ENCODE measurements at regions of chr10 and their contacts with region 1.

Region 1: DNA sequence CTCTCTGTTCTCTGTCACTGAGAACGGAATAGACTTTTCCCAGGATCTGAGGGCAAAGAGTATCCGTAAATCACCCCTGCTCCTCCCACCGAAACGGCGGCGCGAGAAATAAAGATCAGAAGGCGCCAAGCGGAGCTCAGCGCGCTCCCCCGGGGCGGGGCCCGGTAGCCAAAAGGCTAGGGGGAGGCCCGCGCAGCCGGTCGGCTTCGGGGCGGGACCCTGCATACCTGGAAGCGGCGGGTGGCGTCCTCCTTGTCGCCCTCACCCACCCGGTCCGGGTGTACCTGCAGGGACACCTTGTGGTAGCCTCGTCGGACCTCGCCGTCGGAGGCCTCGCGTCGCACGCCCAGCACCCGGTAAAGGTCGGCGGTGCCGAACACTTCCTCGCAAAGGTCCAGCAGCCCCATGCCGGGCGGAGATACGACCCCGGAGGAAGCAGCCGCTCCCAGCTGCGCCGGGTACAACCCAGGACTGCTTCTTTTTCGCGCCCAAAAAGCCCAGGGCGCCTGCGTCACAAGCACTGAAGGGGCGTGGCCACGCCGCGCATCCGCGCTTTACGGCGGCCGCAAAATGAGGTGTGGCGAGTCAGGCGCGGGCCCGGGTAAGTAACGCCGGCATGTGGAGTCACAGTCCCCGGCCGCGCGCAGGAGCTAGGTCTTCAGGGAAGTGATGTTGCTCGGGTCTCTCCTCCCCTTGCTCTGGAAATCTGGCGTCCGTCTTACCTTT is at the start of gene DNAJC9:
- DNase-seq: peak; percentile 99
- ATAC-seq: peak; percentile 94
- H3K4me3 Mint-ChIP-seq: peak within 1 kb of the TSS; percentile 99
- H3K27ac Mint-ChIP-seq: peak within 1 kb of the TSS; percentile 97
- H3K4me1 Mint-ChIP-seq: peaks cover 58% of the 10 kb centered on the region
- H3K27me3 Mint-ChIP-seq: no peaks in the 10 kb centered on the region
- total RNA-seq, gene DNAJC9: 36.9 to 45.4 TPM

Region 2: DNA sequence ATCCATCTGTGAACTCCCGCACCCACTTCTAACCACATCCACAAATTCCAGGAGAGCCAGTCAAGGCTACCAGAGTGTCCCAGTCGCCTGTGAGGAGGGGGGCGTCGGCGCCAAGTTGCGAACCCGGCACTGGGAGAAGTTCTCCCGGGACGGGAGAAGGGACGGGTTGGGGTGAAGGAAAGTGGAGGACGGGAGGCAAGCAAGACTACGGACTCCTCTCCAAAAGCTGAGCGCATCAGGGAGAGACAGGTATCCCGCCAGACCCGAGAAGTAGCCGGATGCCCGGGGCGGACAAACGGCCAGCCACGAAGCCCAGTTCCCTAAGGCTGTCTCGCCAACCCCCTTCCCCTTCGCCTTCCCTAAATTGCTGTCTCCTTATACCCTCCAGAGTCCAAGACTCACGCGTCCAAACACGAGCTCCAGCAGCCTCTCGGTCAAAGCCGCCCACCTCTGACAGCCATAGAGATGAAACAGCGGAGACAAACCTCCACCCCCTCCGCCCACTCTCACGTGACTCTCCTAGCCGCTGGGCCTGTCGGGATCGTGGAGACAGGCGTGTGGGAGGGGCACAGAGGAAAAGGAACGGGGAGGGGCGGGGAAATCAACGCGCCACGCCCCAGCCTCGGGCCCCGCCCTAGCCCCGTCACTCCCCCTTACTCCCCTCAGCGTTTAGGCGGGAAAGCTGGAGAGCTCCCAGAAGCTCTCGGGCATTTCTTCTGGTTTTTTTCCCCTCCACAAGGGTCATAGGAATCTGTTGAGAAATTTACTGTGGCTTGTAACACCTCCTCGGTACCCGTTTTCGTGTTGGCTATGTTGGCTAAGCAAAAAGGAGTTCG is 621.1 kb before region 1 on chr10 and contains the start of gene MICU1:
- CTCF ChIA-PET with region 1: no interaction called
- POLR2A ChIA-PET with region 1: no interaction called
- intact Hi-C with region 1: loop called in 1 of 2 experiments (anchors 1 kb)
- DNase-seq: peak; percentile 98
- ATAC-seq: peak; percentile 99
- H3K4me3 Mint-ChIP-seq: peak within 1 kb of the TSS; percentile 94
- H3K27ac Mint-ChIP-seq: peak within 1 kb of the TSS; percentile 91
- H3K4me1 Mint-ChIP-seq: peaks cover 7% of the 10 kb centered on the region
- H3K27me3 Mint-ChIP-seq: no peaks in the 10 kb centered on the region
- total RNA-seq, gene MICU1: 41.0 to 51.5 TPM

Region 3: DNA sequence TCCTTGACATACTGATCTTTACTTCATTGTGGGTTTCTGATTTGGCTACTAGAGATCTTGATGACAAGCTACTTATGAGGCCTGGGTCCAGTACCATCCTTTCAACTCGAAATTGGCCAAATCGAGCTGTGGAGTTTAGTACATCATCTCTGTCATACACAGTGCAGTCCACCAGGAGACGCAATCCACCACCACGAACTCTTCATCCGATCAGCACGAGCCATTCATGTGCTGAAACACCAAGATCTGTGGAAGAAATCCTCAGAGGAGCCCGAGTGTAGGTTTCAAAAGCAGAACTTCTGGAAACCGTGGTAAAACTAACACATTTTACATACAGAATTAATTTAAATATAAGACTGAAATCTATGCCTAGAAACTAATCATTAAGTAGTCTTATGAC is 14.1 kb before region 1 on chr10:
- CTCF ChIA-PET with region 1: interaction called, 8 read pairs
- POLR2A ChIA-PET with region 1: interaction called, 21 read pairs
- intact Hi-C with region 1: no loop called
- DNase-seq: no peak
- ATAC-seq: no peak
- H3K4me3 Mint-ChIP-seq: no peak overlapping the region
- H3K27ac Mint-ChIP-seq: peak overlapping the region; percentile 56
- H3K4me1 Mint-ChIP-seq: no peaks in the 10 kb centered on the region
- H3K27me3 Mint-ChIP-seq: no peaks in the 10 kb centered on the region

Region 4: GRCh38 chr10:73413528-73414229 is 166.7 kb after region 1 on chr10 and contains the start of gene ANXA7:
- CTCF ChIA-PET with region 1: no interaction called
- POLR2A ChIA-PET with region 1: interaction called, 4 read pairs
- intact Hi-C with region 1: loop called (anchors 1 to 2 kb)
- DNase-seq: peak; percentile 97
- ATAC-seq: peak; percentile 96
- H3K4me3 Mint-ChIP-seq: peak within 1 kb of the TSS; percentile 94
- H3K27ac Mint-ChIP-seq: peak within 1 kb of the TSS; percentile 93
- H3K4me1 Mint-ChIP-seq: peaks cover 52% of the 10 kb centered on the region
- H3K27me3 Mint-ChIP-seq: peaks cover 3% of the 10 kb centered on the region
- total RNA-seq, gene ANXA7: 94.6 to 118 TPM

Region 5: DNA sequence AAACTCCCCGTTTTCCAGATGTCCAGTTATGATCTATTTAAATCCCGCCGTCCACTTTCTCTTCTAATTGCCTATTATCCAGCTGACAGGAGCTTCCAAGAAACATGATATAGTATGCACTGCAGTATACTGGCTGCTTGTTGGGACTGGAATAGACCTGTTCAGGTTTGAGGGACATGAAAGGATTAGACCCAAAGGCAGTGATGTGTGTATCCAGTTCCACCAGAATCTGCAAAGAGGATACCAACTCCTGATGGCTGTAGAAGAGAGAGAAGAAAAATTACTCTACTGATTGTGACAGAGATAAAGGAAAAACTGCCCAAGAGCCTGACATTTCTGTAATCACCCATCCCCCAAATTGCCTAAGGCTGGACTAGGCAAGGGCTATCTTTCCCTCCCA is 177.6 kb after region 1 on chr10:
- CTCF ChIA-PET with region 1: no interaction called
- POLR2A ChIA-PET with region 1: no interaction called
- intact Hi-C with region 1: no loop called
- DNase-seq: no peak
- ATAC-seq: no peak
- H3K4me3 Mint-ChIP-seq: no peak overlapping the region
- H3K27ac Mint-ChIP-seq: no peak overlapping the region
- H3K4me1 Mint-ChIP-seq: peaks cover 8% of the 10 kb centered on the region
- H3K27me3 Mint-ChIP-seq: no peaks in the 10 kb centered on the region

Region 6: DNA sequence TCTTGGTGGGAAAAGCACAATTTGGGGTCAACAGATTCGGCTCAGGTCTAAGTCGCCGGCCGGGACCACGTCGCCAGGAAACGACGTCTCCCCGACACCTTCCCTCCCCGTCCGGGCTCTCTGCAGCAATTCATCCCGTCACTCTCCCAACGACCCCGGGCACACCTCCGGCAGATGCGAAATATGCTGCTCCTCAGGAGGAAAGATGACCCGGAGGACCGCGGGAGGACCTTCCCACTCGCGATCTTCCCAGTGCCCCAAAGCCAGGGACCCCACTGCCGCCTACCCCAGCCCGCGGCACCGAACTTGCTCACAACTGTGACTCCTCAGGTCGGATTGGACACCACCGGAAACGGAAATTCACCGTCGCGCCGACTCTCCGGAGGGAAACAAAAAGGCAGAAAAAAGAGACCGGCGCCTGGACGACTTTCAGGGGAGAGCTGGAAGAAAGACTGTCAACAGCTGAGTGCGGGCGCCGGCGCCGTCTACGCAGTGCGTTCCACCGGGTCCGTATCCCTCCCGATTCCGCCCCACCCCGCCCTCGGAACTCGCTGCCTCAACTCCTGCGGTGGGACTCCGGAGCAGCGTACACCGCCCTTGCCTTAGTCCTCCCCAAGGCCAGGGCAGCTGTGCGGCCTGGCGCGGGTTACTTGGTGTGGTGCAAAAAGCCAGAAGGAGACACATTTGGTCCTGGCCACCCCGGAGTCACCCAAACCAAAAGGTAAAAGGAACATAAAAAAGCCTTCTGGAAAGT is 483.4 kb after region 1 on chr10:
- CTCF ChIA-PET with region 1: no interaction called
- POLR2A ChIA-PET with region 1: interaction called, 5 read pairs
- intact Hi-C with region 1: loop called (anchors 1 to 5 kb)
- DNase-seq: peak; percentile 95
- ATAC-seq: peak; percentile 93
- H3K4me3 Mint-ChIP-seq: peak overlapping the region; percentile 98
- H3K27ac Mint-ChIP-seq: peak overlapping the region; percentile 97
- H3K4me1 Mint-ChIP-seq: peaks cover 9% of the 10 kb centered on the region
- H3K27me3 Mint-ChIP-seq: no peaks in the 10 kb centered on the region

Region 7: DNA sequence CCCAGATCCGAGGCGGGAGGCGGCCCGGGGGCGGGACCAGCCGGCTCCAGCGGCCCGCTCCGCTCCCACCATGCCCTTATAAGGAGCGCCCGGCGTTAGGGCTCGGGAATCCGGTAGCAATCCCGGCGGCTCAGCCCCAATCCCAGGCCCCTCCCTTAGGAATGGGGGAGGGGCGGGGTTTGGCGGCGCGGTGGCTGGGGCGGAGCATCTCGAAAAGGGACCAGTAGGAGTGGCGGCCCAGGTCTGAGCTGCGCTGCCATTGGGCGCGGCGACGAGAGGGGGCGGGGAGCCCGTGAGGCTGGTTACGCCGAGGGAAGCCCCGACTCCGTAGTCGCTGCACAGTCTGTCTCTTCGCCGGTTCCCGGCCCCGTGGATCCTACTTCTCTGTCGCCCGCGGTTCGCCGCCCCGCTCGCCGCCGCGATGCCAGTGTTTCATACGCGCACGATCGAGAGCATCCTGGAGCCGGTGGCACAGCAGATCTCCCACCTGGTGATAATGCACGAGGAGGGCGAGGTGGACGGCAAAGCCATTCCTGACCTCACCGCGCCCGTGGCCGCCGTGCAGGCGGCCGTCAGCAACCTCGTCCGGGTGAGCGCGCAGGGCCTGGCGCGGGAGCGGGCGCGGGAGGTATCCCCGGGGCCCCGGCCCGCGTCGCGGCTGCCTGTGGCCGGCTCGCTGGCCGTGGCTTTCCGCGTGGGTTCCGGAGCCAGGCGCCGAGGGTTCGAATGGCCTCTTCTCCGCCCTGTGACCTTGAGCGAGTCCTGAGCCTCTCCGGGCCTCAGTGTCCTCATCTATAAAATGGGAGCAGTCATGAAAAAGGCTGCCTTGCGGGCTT is 751.1 kb after region 1 on chr10 and contains the start of gene VCL:
- CTCF ChIA-PET with region 1: no interaction called
- POLR2A ChIA-PET with region 1: no interaction called
- intact Hi-C with region 1: loop called in 1 of 2 experiments (anchors 10 kb)
- DNase-seq: peak; percentile 97
- ATAC-seq: peak; percentile 98
- H3K4me3 Mint-ChIP-seq: peak within 1 kb of the TSS; percentile 89
- H3K27ac Mint-ChIP-seq: peak within 1 kb of the TSS; percentile 97
- H3K4me1 Mint-ChIP-seq: peaks cover 39% of the 10 kb centered on the region
- H3K27me3 Mint-ChIP-seq: no peaks in the 10 kb centered on the region
- total RNA-seq, gene VCL: 20.7 to 22.7 TPM

Measured in activated CD4-positive, alpha-beta T cell treated with anti-CD3 and anti-CD28 coated beads for 36 hours (primary cell).